ENCODE measurements at regions of chr7 and their contacts with region 1.

Region 1: GRCh38 chr7:113918946-113919345 is at the start of gene PPP1R3A:
- DNase-seq: no peak
- total RNA-seq, gene PPP1R3A: 74.8 TPM

Region 2: GRCh38 chr7:113774182-113774807 is 144.7 kb before region 1 on chr7:
- intact Hi-C with region 1: loop called (anchors 5 kb)
- DNase-seq: no peak

Region 3: DNA sequence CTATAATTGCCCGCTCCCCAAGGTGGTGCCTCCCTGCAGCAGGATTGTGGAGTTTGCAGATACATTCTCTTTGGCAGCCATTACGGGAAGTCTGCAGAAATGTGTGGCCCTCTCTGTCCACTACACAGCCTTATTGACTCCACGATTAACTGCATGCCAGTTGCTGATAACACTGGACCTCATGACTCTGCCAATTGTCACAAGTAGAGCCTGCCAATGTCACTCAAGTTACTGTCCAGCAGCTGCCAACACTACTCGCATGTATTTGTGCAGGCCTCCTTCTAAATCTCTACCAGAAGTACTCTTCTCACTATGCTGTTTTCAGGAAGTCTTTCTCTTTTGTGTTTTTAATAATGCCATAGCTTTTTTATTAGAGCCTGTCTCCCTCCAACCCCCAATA is 128.9 kb before region 1 on chr7:
- intact Hi-C with region 1: loop called (anchors 5 kb)
- DNase-seq: no peak

Region 4: DNA sequence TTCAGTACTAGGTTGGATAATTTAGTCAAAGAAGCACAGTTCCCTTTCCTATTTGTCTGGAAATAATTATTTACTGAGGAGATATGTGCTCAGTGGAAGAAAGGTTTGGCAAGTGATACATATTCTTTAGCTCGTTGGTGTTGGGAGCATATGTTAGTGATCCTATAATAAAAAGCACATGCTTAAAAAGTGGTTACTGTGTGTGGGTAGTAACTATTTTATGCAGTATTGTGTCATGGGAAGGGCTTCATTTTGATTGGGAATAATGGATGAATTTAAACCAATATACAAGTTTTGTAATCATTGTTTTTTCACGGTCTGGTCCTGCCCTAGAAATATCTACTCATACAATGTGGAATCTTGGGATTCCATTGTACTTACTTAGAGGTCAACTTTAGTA is 188.6 kb after region 1 on chr7:
- intact Hi-C with region 1: no loop called
- DNase-seq: no peak

Region 5: DNA sequence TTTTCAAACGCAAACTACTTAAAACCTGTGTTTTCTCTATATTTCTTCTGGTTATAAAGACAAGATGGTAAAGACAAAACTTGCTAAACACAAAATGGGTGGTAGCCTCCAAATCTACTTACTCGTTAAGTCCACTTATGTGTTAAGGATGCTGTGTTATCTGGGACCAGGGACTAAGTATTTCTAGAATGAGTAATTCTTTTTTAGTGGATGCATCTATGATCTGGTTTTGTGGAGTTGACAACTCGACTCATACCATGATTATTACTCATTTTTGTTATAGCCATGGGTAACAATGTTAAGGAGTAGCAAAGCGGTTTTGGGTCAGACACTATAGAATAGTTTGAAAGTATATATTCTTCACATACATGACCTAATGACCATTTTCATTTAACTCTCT is 256.2 kb after region 1 on chr7:
- intact Hi-C with region 1: no loop called
- DNase-seq: no peak

Measured in cardiac septum (tissue), 1 donor.